ENCODE measurements at regions of chr6 and their contacts with region 1.

Region 1: GRCh38 chr6:43790025-43790523 is 20.1 kb downstream of the VEGFA start:
- DNase-seq: no peak
- ATAC-seq: peak; percentile 31
- H3K4me3 ChIP-seq: no peak overlapping the region
- H3K27ac ChIP-seq: no peak overlapping the region
- H3K4me1 ChIP-seq: peaks cover 11% of the 10 kb centered on the region; the same call in 1 of the 2 replicates
- H3K27me3 ChIP-seq: no peaks in the 10 kb centered on the region
- CTCF ChIP-seq: no peak
- POLR2A ChIP-seq: no peak
- RAD21 ChIP-seq: no peak

Region 2: GRCh38 chr6:43803049-43803782 is 13.1 kb after region 1 on chr6:
- CTCF ChIA-PET with region 1: interaction called, 3 read pairs
- POLR2A ChIA-PET with region 1: interaction called, 10 read pairs
- dilution Hi-C with region 1: no loop called
- in situ Hi-C with region 1: no loop called
- intact Hi-C with region 1: no loop called
- DNase-seq: no peak
- ATAC-seq: no peak
- H3K4me3 ChIP-seq: no peak overlapping the region
- H3K27ac ChIP-seq: peak overlapping the region; percentile 34; the same call in 1 of the 2 replicates
- H3K4me1 ChIP-seq: peaks cover 40% of the 10 kb centered on the region
- H3K27me3 ChIP-seq: 0 out of 2 replicates have a peak, but pooled peaks cover 2% of the 10 kb centered on the region
- CTCF ChIP-seq: no peak
- POLR2A ChIP-seq: no peak
- RAD21 ChIP-seq: no peak

Region 3: DNA sequence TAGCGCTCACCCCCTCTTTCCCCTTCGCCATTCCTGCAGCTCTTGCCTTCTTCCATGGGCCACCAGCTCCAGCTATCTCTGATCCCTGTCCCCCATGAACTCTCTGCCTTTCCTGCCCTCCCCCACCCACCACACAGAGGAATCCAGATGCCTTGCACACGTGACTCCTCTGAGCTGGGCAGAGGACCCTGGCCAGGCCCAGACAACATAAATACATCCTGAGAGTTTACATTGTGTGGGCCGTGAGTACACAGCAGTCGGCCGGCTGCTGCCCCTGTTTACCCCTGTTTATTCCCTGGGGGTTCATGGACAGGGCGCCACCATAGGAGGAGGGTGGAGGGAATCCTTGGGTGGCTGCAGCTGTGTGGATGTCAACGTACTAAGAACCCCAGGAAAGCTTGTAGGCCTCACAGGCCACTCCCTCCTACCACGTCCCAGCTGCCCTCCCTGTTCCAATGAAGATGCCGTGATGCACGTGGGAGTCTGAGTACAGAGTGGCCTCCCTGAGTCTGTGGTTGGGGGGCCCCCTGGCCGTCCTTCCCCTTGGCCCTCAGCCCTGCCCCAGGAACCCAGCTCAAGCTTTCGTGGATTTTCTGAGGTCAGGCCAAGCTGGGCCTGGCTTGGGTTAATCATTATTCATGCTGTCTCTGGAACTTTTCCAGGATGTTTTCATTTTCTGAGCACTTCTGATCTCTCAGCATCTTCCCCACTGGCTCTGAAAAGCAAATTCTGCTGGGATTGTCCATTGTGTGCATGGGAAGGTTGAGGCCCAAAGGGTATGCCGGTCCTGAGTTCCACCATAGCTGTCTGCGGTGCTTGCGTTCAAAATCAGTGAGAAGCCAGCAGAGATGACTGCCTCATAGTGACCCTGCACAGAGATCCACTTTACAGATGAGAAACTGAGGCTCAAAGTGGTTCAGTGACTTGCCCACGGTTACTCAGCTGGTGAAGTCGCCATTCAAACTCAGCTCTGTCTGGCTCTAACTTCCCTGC is 200.8 kb after region 1 on chr6:
- CTCF ChIA-PET with region 1: interaction called, 3 read pairs
- POLR2A ChIA-PET with region 1: no interaction called
- dilution Hi-C with region 1: no loop called
- in situ Hi-C with region 1: no loop called
- intact Hi-C with region 1: loop called (anchors 5 kb)
- DNase-seq: peak; percentile 89
- ATAC-seq: peak; percentile 85
- H3K4me3 ChIP-seq: no peak overlapping the region
- H3K27ac ChIP-seq: peak overlapping the region; percentile 72
- H3K4me1 ChIP-seq: peaks cover 21% of the 10 kb centered on the region
- H3K27me3 ChIP-seq: peaks cover 9% of the 10 kb centered on the region
- CTCF ChIP-seq: no peak
- POLR2A ChIP-seq: no peak
- RAD21 ChIP-seq: no peak

Region 4: DNA sequence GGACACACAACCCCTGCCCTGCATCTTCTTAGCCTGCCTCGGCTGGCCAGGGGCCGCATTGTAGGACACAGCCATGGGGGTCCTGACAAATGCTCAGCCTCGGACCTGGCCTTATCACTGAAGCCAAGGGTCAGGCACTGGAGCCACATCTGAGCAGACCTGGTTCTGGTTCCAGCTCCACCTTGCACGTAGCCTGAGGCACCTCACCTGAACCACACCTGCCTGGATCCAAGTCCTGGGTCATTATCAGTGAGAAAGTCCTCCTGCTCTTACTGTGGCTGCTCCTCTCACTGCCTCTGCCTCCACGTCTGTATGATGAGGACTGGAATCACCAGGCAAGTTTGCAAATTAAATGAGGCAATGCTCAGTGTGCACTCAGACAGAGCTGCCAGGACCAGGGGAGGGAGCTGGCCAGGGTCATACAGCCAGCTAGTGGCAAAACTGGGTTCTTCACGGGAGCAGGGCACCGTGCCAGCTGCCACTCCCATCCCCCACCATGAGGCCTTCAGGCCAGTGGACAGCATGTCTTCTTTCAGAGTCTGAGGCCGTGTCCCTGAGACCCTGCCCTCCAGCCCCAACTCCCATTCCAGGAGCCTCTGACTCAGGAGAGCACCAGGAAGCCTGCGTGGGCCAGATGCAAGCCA is 297.0 kb after region 1 on chr6:
- CTCF ChIA-PET with region 1: no interaction called
- POLR2A ChIA-PET with region 1: no interaction called
- dilution Hi-C with region 1: no loop called
- in situ Hi-C with region 1: no loop called
- intact Hi-C with region 1: no loop called
- DNase-seq: no peak
- ATAC-seq: peak; percentile 33
- H3K4me3 ChIP-seq: no peak overlapping the region
- H3K27ac ChIP-seq: no peak overlapping the region
- H3K4me1 ChIP-seq: peaks cover 11% of the 10 kb centered on the region
- H3K27me3 ChIP-seq: no peaks in the 10 kb centered on the region
- CTCF ChIP-seq: no peak
- POLR2A ChIP-seq: no peak
- RAD21 ChIP-seq: no peak

Region 5: GRCh38 chr6:44762496-44762895 is 972.4 kb after region 1 on chr6:
- CTCF ChIA-PET with region 1: no interaction called
- POLR2A ChIA-PET with region 1: no interaction called
- dilution Hi-C with region 1: no loop called
- in situ Hi-C with region 1: no loop called
- intact Hi-C with region 1: no loop called
- DNase-seq: no peak
- ATAC-seq: no peak
- H3K4me3 ChIP-seq: no peak overlapping the region
- H3K27ac ChIP-seq: no peak overlapping the region
- H3K4me1 ChIP-seq: no peaks in the 10 kb centered on the region
- H3K27me3 ChIP-seq: peaks cover 6% of the 10 kb centered on the region
- CTCF ChIP-seq: no peak
- POLR2A ChIP-seq: no peak
- RAD21 ChIP-seq: no peak

Measured in IMR-90 (cell line).